Activated T-helper 2 cell treated with anti-CD3 and anti-CD28 coated beads, Interferon-gamma antibody, Interleukin-2, Interleukin-4, amounts not matched to agents 10 μg/mL and 5 μg/mL and 100 μg/mL, durations not matched to agents 14 hours and 24 hours and 36 hours (primary cell): ENCODE measurements at regions of chr2 and their contacts with region 1.

Region 1: DNA sequence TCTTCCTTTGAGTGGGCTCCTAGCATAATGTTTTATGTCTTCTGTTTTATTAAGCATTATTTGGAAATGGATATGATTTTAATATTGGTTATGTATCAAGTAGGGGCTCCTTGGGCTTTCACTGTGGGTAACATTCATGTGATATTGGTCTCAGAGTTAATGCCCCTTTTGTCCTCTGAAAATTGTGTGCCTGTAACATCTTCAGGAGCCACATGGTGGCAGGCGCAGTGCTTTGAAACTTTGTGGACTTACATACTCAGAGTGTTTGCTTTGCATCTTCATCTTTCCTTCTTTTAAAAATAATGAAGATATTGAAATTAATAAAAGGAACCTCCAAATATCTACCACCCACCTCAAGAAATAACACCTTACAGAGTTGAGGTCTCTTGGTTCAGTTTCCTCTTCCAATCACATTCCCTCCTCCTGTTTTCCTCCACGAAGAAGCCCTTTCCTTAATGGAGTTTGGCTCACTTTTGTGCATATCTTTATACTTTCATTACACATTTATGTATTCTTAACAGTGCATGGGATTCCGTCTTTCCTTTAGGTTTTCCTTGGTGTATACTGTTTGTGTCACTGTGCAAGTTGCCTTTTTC is 73.5 kb downstream of the LIMS1 start:
- DNase-seq: no peak
- H3K4me3 Mint-ChIP-seq: no peak overlapping the region
- H3K27ac Mint-ChIP-seq: no peak overlapping the region
- H3K4me1 Mint-ChIP-seq: peaks cover 70% of the 10 kb centered on the region
- H3K27me3 Mint-ChIP-seq: no peaks in the 10 kb centered on the region

Region 2: GRCh38 chr2:108594132-108594981 is 13.4 kb before region 1 on chr2:
- intact Hi-C with region 1: loop called (anchors 1 kb)
- DNase-seq: no peak
- H3K4me3 Mint-ChIP-seq: peak overlapping the region; percentile 75
- H3K27ac Mint-ChIP-seq: peak overlapping the region; percentile 91
- H3K4me1 Mint-ChIP-seq: peaks cover 58% of the 10 kb centered on the region
- H3K27me3 Mint-ChIP-seq: no peaks in the 10 kb centered on the region

Region 3: GRCh38 chr2:108621087-108621559 is 13.3 kb after region 1 on chr2:
- intact Hi-C with region 1: loop called (anchors 1 kb)
- DNase-seq: peak; percentile 74
- H3K4me3 Mint-ChIP-seq: peak overlapping the region; percentile 90
- H3K27ac Mint-ChIP-seq: peak overlapping the region; percentile 97
- H3K4me1 Mint-ChIP-seq: peaks cover 74% of the 10 kb centered on the region
- H3K27me3 Mint-ChIP-seq: no peaks in the 10 kb centered on the region